Lower leg skin (tissue), 4 donors: ENCODE measurements at regions of chr4 and their contacts with region 1.

Region 1: DNA sequence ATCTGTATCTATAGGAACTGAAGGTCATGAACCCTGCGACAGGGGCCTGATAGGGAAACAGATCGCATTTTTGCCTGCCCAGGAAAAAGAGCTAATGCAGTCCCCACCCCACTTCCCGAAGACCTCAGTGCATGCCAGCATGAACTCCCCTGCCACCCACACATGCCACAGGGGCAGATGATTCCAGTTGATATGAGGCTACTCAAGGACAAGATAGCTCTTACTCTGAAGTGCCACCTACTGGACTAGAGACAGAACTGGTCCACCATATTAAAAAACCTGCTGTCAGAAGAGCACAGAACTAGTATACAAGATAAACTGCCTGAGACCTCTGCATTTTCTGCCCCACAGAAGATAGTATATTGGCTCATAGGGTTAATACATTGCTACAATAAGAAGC is 68.0 kb downstream of the YIPF7 start:
- DNase-seq: no peak
- H3K4me3 ChIP-seq: no peak overlapping the region
- CTCF ChIP-seq: no peak
- POLR2A ChIP-seq: no peak

Region 2: GRCh38 chr4:43567644-43568043 is 1015.7 kb before region 1 on chr4:
- intact Hi-C with region 1: loop called (anchors 5 kb)
- DNase-seq: no peak
- H3K4me3 ChIP-seq: no peak overlapping the region
- CTCF ChIP-seq: no peak
- POLR2A ChIP-seq: no peak

Region 3: GRCh38 chr4:45518832-45519231 is 935.4 kb after region 1 on chr4:
- intact Hi-C with region 1: no loop called
- DNase-seq: no peak
- H3K4me3 ChIP-seq: no peak overlapping the region
- CTCF ChIP-seq: no peak
- POLR2A ChIP-seq: no peak